ENCODE measurements at regions of chr14 and their contacts with region 1.

Region 1: GRCh38 chr14:64986578-64987571 is at the start of gene FNTB:
- DNase-seq: peak; percentile 97 to 99 (median 98)
- H3K4me3 ChIP-seq: peak within 1 kb of the TSS; percentile 85 to 97 (median 93)
- H3K27ac ChIP-seq: peak within 1 kb of the TSS; percentile 36 to 77
- H3K4me1 ChIP-seq: peaks cover 9 to 54% (median 36%) of the 10 kb centered on the region in 4 experiments
- H3K27me3 ChIP-seq: no peaks in the 10 kb centered on the region

Region 2: DNA sequence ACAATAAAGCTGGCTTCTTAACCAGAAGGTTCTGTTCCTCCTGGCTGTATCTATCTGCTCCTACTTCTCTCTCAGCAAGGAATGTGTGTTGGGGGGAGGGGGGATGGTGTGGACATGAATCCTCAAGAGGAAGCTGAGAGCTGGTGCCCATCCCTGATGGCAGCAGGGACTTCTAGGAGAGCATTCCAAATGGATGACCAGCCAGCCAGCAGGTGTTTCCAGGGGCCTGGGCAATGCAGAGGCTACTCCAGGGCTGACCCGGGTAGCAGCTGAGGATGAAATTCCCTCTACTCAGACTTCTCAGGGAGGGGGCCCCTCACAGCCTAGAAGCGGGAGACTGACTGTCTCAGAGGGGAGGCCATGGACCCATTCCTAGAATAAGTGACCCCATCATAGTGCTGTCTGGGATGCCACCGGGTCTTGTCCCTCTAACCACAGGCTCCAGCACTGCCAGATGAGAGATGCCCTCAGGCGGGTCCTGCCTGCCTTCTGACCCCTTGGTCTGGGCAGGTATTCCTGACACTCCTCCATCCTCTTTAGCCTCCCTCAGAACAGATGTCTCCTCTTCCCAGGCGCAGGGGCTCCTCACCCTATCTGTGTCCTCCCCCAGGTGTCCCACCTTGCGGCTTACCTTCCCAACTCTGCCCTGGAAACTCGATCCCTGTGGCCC is 15.9 kb before region 1 on chr14:
- CTCF ChIA-PET with region 1: interaction called, 16 read pairs
- POLR2A ChIA-PET with region 1: no interaction called
- DNase-seq: no peak
- H3K4me3 ChIP-seq: peak overlapping the region in 4 of 7 experiments; percentile 67 to 80 (median 71)
- H3K27ac ChIP-seq: no peak overlapping the region
- H3K4me1 ChIP-seq: peaks cover 0 to 35% (median 27%) of the 10 kb centered on the region in 4 experiments
- H3K27me3 ChIP-seq: peaks cover 0 to 9% (median 0%) of the 10 kb centered on the region in 5 experiments

Region 3: DNA sequence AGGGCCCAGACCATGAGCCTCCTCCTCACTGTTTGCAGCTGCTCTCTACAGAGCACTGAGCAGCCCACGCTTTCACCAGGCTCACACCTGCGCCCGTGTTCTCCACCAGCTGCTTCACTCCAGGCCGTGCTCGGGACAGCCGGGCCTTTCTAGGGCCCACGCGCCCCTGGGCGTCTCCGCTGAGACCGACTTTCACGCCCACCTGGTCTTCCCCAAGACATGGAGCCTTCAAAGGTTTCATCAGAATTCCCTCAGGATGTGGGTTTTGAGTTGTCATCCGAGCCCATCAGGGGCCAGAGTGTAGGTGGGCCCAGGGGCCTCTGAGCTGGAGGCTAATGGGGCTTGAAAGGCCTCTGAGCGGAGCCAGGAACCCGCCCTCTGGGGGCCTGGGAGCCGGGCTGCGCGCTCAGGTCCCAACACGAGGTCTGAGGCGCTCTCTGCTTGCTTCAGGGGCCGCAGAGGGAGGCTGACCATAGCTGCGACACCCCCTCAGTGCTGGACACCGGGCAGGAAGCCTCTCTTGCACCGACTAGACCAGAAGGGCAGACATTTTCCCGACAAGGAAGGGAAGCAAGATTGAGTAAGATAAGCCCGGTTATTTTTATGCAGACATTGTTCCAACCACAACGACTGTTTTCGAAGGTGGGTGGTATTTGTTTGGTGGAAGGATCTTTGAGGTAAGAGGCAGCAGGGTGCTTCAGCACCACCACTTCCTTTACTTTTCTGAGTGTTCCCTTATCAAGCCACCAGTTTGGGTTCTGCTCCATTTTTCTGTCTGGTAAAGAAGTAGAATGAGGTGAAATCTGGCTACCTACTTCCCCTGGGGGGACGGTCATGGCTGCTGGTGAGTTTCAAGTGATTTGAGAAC is 300.6 kb after region 1 on chr14:
- CTCF ChIA-PET with region 1: no interaction called
- POLR2A ChIA-PET with region 1: no interaction called
- DNase-seq: peak in 2 of 3 donors; percentile 76 to 84
- H3K4me3 ChIP-seq: no peak overlapping the region
- H3K27ac ChIP-seq: no peak overlapping the region
- H3K4me1 ChIP-seq: peaks cover 12 to 48% (median 41%) of the 10 kb centered on the region in 4 experiments
- H3K27me3 ChIP-seq: no peaks in the 10 kb centered on the region

Measured in common myeloid progenitor, CD34-positive (primary cell).